ENCODE measurements at regions of chr2 and their contacts with region 1.

Region 1: DNA sequence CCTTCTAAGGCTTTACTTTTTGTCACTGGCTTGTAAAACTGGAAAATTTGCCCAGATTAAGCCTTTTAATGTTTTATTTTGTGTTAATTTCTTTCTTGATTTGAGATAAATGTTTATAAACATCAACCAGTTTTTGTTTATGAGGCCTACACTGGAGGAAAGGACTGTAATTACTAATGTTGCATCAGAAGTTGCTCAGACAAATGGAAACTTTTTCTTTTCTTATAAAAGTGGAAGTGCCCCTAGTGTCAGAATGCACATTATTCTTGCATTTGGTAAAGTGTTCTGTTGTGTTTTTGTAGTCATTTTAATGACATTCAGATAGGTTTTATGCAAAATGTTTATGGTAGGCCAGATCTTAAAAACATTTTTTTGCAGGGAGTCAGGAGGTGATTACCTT is 25.3 kb downstream of the LCLAT1 start:
- DNase-seq: no peak
- ATAC-seq: no peak
- H3K4me3 ChIP-seq: no peak overlapping the region
- H3K4me3 Mint-ChIP-seq: no peak overlapping the region
- H3K27ac ChIP-seq: no peak overlapping the region
- H3K27ac Mint-ChIP-seq: no peak overlapping the region
- H3K4me1 ChIP-seq: peaks cover 0 to 12% of the 10 kb centered on the region in 2 experiments
- H3K4me1 Mint-ChIP-seq: peaks cover 39 to 62% (median 45%) of the 10 kb centered on the region in 3 donors
- H3K27me3 ChIP-seq: no peaks in the 10 kb centered on the region
- H3K27me3 Mint-ChIP-seq: no peaks in the 10 kb centered on the region

Region 2: DNA sequence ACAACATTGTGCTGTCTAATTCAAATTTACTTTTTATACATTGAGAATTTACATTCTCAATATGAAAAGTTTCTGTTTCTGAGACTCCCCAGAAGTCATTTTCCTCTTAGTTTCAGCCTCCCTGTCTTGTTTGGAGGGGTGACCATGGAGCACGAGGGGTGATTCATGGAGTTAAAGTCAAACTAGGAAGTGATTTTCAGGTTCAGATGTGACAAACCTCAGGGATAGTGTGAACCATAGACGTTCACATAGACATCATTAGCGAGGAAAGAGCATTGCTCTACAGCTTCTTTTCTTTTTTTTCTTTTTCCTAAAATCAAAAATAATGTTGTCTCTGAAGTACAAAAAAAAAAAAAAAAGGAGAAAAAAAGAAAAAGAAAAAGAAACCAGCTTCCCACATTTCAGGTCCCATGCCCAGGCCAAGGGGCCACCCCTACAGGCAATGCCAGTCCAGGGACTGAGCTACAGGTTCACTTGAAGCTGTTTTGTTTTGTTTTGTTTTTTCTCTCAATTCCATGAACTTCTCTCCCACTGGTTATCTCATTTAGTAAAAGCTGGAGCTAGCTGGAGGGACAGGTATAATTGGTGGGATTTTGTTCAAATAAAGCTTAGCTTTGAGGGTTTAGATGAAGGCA is 43.4 kb before region 1 on chr2:
- CTCF ChIA-PET with region 1: no interaction called
- POLR2A ChIA-PET with region 1: interaction called in 1 of 2 experiments, 10 read pairs
- DNase-seq: no peak
- ATAC-seq: no peak
- H3K4me3 ChIP-seq: no peak overlapping the region
- H3K4me3 Mint-ChIP-seq: peak overlapping the region in 1 of 3 donors; percentile 56
- H3K27ac ChIP-seq: no peak overlapping the region
- H3K27ac Mint-ChIP-seq: peak overlapping the region; percentile 65 to 78
- H3K4me1 ChIP-seq: peaks cover 16 to 21% of the 10 kb centered on the region in 2 experiments
- H3K4me1 Mint-ChIP-seq: peaks cover 36 to 41% (median 36%) of the 10 kb centered on the region in 3 donors
- H3K27me3 ChIP-seq: no peaks in the 10 kb centered on the region
- H3K27me3 Mint-ChIP-seq: no peaks in the 10 kb centered on the region

Region 3: DNA sequence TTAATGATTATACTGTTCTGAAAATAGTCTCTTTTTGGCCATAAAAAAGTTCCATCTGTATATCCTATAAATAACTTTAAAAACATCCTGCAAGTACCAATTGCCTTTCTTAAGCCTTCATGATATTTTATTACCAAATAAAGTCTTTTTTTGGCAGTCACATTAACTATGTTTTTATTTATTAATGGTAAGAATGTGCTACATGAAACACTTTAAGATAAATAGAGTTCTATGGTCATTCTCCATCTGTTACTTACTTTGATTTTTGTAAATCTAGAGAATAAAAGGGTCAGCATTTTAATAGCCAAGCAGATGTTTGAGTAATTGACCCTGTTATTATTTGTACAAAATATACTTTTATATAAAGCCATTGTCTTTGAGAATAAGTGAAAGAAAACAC is 27.4 kb after region 1 on chr2:
- CTCF ChIA-PET with region 1: no interaction called
- POLR2A ChIA-PET with region 1: no interaction called
- DNase-seq: no peak
- ATAC-seq: no peak
- H3K4me3 ChIP-seq: no peak overlapping the region
- H3K4me3 Mint-ChIP-seq: no peak overlapping the region
- H3K27ac ChIP-seq: no peak overlapping the region
- H3K27ac Mint-ChIP-seq: no peak overlapping the region
- H3K4me1 ChIP-seq: peaks cover 12 to 15% of the 10 kb centered on the region in 2 experiments
- H3K4me1 Mint-ChIP-seq: peaks cover 30 to 41% (median 32%) of the 10 kb centered on the region in 3 donors
- H3K27me3 ChIP-seq: no peaks in the 10 kb centered on the region
- H3K27me3 Mint-ChIP-seq: no peaks in the 10 kb centered on the region

Region 4: DNA sequence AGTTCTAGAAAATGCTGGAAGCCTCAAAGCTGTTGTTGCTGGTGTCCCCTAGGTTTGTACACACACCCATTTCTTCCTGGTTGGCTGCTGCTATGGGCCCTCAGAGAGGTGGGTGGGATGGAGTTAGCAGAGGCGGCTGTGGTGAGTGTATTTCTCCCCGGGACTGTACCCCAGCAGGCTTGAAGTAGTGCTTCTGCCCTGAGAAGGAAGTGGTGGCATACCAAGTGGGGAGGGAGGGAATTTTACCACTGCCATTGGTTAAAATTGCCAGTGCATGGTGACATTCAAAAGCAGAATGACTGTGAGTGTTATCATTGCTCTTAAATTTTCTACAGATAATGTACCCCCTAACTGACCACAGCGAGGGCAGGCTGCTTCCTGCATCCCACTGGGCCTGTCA is 460.5 kb after region 1 on chr2:
- CTCF ChIA-PET with region 1: no interaction called
- POLR2A ChIA-PET with region 1: no interaction called
- DNase-seq: no peak
- ATAC-seq: no peak
- H3K4me3 ChIP-seq: no peak overlapping the region
- H3K4me3 Mint-ChIP-seq: no peak overlapping the region
- H3K27ac ChIP-seq: no peak overlapping the region
- H3K27ac Mint-ChIP-seq: no peak overlapping the region
- H3K4me1 ChIP-seq: no peaks in the 10 kb centered on the region
- H3K4me1 Mint-ChIP-seq: no peaks in the 10 kb centered on the region
- H3K27me3 ChIP-seq: peaks cover 0 to 8% of the 10 kb centered on the region in 2 experiments
- H3K27me3 Mint-ChIP-seq: no peaks in the 10 kb centered on the region

Measured in T-cell (primary cell).